Endothelial cell of umbilical vein (primary cell): ENCODE measurements at regions of chr12 and their contacts with region 1.

Region 1: GRCh38 chr12:12032851-12033588 is 37.7 kb upstream of the BCL2L14 start:
- DNase-seq: peak; percentile 91
- H3K4me3 ChIP-seq: peak overlapping the region; percentile 22 to 67 (median 49)
- H3K27ac ChIP-seq: peak overlapping the region; percentile 73
- H3K4me1 ChIP-seq: peaks cover 8% of the 10 kb centered on the region
- H3K27me3 ChIP-seq: peaks cover 0 to under 1% of the 10 kb centered on the region in 2 experiments
- CTCF ChIP-seq: peak; percentile 78 to 82
- POLR2A ChIP-seq: peak; percentile 52

Region 2: GRCh38 chr12:11228296-11228879 is 804.6 kb before region 1 on chr12:
- CTCF ChIA-PET with region 1: no interaction called
- POLR2A ChIA-PET with region 1: no interaction called
- dilution Hi-C with region 1: no loop called
- intact Hi-C with region 1: loop called (anchors 5 kb)
- DNase-seq: peak; percentile 73
- H3K4me3 ChIP-seq: no peak overlapping the region
- H3K27ac ChIP-seq: no peak overlapping the region
- H3K4me1 ChIP-seq: no peaks in the 10 kb centered on the region
- H3K27me3 ChIP-seq: peaks cover 5 to 13% of the 10 kb centered on the region in 2 experiments
- CTCF ChIP-seq: peak; percentile 80 to 84
- POLR2A ChIP-seq: no peak

Region 3: DNA sequence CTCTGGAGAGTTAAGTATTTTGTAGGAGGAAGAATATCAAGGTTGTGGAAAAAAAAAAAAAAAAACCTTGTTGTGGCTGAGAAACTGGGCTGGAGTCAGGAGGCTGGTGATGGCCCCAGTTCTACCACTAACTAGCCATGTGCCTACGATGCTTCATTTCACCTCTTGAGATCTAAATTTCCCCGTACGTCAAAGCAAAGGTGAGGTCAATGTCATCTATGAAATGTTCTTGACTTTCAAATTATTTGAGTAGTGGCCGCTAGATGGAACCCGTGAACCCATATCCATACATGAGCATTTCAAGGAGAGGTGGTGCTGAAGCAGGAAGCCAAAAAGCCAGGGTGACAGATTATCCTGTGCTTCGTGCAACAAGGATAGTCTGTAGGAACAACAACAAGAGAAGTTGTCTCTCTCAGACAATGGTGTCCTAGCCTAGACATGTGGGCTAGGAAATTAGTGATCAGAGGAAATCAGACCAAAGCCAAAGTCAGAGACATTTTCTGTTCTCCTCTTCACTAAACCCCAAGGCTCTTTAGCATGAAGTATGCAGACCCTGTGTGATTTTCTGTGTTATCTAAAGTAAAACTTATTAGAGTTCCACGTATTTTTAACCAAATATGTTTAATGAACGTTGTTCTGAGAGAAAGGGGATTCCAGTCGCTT is 479.0 kb before region 1 on chr12:
- CTCF ChIA-PET with region 1: interaction called, 65 read pairs
- POLR2A ChIA-PET with region 1: no interaction called
- dilution Hi-C with region 1: no loop called
- intact Hi-C with region 1: loop called (anchors 1 kb)
- DNase-seq: peak; percentile 61
- H3K4me3 ChIP-seq: no peak overlapping the region
- H3K27ac ChIP-seq: no peak overlapping the region
- H3K4me1 ChIP-seq: no peaks in the 10 kb centered on the region
- H3K27me3 ChIP-seq: peaks cover 27 to 34% of the 10 kb centered on the region in 2 experiments
- CTCF ChIP-seq: peak; percentile 43 to 49
- POLR2A ChIP-seq: no peak

Region 4: DNA sequence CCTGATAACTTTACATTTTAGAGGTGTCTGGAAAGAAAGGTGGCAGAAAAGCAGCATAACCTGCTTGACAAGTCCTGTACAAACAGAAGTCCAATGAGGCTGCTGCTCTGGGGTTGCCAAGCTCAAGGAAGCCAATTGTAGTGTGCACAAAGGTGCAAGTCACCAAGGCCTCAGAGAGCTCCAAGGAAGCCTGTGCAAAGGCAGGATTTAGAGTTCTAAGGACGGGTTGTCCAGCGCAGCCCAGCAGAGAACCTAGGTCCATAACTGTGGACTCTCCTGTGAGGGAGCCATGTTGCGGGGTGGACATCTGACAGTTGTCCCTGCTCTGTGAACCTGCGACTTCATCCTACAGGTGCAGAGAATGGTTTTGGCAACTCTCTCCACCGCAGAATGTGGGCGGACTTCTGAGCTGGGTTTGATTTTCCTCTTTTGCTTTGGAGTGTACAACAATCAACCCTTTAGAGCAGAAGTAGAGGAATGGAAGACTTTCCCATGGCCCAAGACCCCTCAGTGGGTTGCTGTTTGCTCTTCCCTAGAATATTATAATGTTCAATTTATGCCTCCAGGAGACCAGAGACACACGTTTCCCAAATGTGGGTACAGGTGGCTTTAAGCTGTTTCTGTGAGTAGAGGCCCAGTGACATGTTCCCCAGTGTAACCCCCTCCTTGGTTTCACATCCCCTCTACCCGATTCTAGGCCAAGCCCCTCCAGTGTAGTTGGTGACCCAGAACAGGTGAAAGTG is 302.6 kb before region 1 on chr12:
- CTCF ChIA-PET with region 1: interaction called, 6 read pairs
- POLR2A ChIA-PET with region 1: no interaction called
- dilution Hi-C with region 1: no loop called
- intact Hi-C with region 1: loop called (anchors 5 kb)
- DNase-seq: no peak
- H3K4me3 ChIP-seq: no peak overlapping the region
- H3K27ac ChIP-seq: peak overlapping the region; percentile 91
- H3K4me1 ChIP-seq: peaks cover 43% of the 10 kb centered on the region
- H3K27me3 ChIP-seq: no peaks in the 10 kb centered on the region
- CTCF ChIP-seq: no peak
- POLR2A ChIP-seq: no peak

Region 5: GRCh38 chr12:11812586-11813427 is 220.2 kb before region 1 on chr12:
- CTCF ChIA-PET with region 1: interaction called, 15 read pairs
- POLR2A ChIA-PET with region 1: no interaction called
- dilution Hi-C with region 1: no loop called
- intact Hi-C with region 1: no loop called
- DNase-seq: peak; percentile 59
- H3K4me3 ChIP-seq: peak overlapping the region in 1 of 3 experiments; percentile 29
- H3K27ac ChIP-seq: peak overlapping the region; percentile 77
- H3K4me1 ChIP-seq: peaks cover 35% of the 10 kb centered on the region
- H3K27me3 ChIP-seq: no peaks in the 10 kb centered on the region
- CTCF ChIP-seq: peak in 1 of 2 donors; percentile 40
- POLR2A ChIP-seq: peak; percentile 46

Region 6: DNA sequence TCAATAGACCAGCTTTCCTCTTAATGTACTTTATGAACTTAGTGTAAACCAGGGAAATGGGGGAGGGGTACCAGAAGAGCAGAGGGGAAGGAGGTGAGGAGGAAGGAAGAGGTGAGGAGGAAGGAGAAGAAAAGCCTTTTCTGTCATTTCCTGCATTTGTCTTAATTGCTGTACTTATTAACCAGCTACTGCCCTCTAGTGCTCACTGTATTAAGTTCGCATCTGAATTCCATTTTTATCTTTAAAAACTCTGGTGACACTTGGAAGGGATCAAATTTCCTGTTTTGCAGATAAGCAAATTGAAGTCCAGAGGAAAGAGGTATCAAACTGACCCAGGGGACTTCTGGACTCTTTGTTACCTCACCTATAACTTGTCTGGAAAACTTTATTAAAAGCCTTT is 294.8 kb after region 1 on chr12:
- CTCF ChIA-PET with region 1: interaction called, 80 read pairs
- POLR2A ChIA-PET with region 1: no interaction called
- dilution Hi-C with region 1: no loop called
- intact Hi-C with region 1: loop called (anchors 2 kb)
- DNase-seq: peak; percentile 71
- H3K4me3 ChIP-seq: no peak overlapping the region
- H3K27ac ChIP-seq: peak overlapping the region; percentile 48
- H3K4me1 ChIP-seq: peaks cover 8% of the 10 kb centered on the region
- H3K27me3 ChIP-seq: no peaks in the 10 kb centered on the region
- CTCF ChIP-seq: peak; percentile 49 to 61
- POLR2A ChIP-seq: no peak